GM13976 (cell line): ENCODE measurements at regions of chr11 and their contacts with region 1.

Region 1: GRCh38 chr11:58524232-58525036 is 16.5 kb upstream of the OR5B21 start:
- DNase-seq: peak; percentile 35
- CTCF ChIP-seq: peak; percentile 70

Region 2: GRCh38 chr11:57667736-57668435 is 856.5 kb before region 1 on chr11 and contains the start of gene ZDHHC5:
- in situ Hi-C with region 1: loop called (anchors 25 kb)
- DNase-seq: peak; percentile 98
- CTCF ChIP-seq: peak; percentile 43